ENCODE measurements at regions of chr16 and their contacts with region 1.

Region 1: GRCh38 chr16:57802341-57803133 is at the start of gene KIFC3:
- DNase-seq: peak; percentile 97
- total RNA-seq, gene KIFC3: 63.9 to 67.7 TPM

Region 2: DNA sequence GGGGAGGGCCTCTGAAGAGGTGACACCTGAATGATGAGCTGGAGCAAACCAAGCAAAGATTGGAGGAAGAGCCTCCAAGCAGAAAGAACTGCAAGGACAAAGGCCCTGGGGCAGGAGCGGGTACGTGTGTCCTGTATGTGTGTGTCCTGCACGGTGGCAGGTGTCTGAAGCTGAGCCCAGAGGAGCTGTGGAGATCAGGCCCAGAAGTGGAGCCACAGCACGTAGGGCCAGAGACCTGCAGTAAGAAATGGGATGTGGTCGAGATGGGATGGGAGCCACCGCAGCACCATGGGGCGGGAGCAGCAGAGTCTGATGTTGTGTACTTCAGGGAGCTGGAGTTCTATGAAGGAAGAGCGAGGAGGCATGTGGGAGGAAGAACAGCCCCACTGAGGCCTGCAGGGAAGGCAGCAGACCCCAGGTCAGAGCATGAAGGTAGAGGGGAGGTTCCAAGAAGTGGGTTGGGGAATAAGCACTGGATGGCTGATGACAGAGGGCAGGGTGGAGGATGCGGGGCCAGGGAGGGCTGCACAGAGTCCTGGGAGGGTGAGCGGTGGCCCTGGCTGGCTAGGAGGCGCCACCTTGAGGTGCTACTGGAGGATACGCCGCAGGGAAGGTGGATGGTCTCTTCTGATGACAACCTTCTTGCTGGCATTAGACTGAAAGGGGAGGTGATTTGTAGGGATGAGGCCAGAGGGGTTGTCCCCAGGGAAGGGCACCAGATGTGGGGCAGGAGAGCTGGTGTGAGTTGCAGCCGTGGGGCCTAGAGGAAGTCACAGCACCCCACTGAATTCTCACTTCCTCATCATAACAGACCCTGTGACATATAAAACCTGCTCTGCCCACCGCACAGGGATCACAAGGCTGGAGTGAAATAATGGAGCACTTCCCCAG is 851.4 kb before region 1 on chr16:
- intact Hi-C with region 1: loop called in 1 of 2 experiments (anchors 5 kb)
- DNase-seq: peak; percentile 83

Region 3: DNA sequence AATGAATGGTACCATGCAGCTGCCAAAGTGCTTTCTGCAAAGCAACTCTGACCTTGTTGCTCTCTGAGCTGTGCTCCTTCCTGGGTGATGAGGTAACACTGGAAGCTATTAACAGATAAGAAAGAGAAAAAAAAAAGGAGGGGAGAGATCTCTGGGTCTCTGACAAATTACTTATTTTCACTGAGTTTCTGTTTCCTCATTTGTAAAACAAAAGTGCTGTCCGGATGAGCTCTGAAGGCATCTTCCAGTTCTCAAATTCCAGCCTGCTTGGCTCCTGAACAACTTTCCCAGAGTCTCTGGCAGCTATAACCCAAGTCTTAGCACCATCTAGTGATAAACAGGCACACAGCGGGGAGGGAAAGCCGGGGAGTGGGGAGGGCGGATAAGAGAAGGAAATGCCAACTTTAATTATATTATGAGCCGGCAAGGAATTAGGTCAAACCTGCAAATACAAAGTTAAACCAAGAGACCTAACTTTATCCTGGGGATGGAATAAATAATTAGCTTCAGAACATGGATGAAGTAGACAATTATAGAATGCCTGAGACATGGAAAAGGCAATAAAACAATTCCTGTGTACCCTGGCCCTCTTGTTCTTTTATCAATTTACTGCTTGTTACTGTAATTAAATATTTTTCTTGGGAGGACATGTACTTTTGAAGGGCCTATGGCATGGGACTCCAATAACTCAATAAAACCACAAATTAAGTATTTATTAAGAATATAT is 61.1 kb after region 1 on chr16:
- intact Hi-C with region 1: loop called in 1 of 2 experiments (anchors 5 kb)
- DNase-seq: peak; percentile 88

Measured in posterior vena cava (tissue), 2 donors.